Activated CD4-positive, alpha-beta T cell treated with anti-CD3 and anti-CD28 coated beads for 36 hours (primary cell): ENCODE measurements at regions of chr11 and their contacts with region 1.

Region 1: GRCh38 chr11:126310228-126310991 is 6.5 kb downstream of the DCPS start:
- DNase-seq: peak; percentile 74
- ATAC-seq: peak; percentile 60
- H3K4me3 Mint-ChIP-seq: no peak overlapping the region
- H3K27ac Mint-ChIP-seq: no peak overlapping the region
- H3K4me1 Mint-ChIP-seq: peaks cover 17% of the 10 kb centered on the region
- H3K27me3 Mint-ChIP-seq: no peaks in the 10 kb centered on the region

Region 2: GRCh38 chr11:125797641-125798040 is 512.8 kb before region 1 on chr11:
- CTCF ChIA-PET with region 1: no interaction called
- POLR2A ChIA-PET with region 1: no interaction called
- intact Hi-C with region 1: no loop called
- DNase-seq: no peak
- ATAC-seq: no peak
- H3K4me3 Mint-ChIP-seq: no peak overlapping the region
- H3K27ac Mint-ChIP-seq: no peak overlapping the region
- H3K4me1 Mint-ChIP-seq: no peaks in the 10 kb centered on the region
- H3K27me3 Mint-ChIP-seq: no peaks in the 10 kb centered on the region

Region 3: DNA sequence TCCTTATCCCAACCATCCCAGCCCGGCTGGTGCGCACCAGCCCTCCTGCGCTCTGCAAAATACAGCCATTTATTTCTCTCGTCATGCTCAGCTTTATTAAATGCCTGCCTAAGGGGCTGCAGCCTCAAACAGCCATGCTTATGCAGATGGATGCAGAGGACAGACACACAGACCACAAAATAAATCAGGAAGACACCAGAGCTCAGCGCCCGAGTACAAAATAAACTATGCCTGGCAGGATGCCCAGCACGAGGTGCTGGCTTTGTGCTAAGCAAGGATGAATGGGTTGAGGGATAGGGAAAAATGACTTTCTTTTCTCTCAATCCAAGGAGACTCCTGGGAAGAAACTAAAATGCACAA is 169.5 kb before region 1 on chr11:
- CTCF ChIA-PET with region 1: no interaction called
- POLR2A ChIA-PET with region 1: no interaction called
- intact Hi-C with region 1: no loop called
- DNase-seq: no peak
- ATAC-seq: no peak
- H3K4me3 Mint-ChIP-seq: no peak overlapping the region
- H3K27ac Mint-ChIP-seq: no peak overlapping the region
- H3K4me1 Mint-ChIP-seq: no peaks in the 10 kb centered on the region
- H3K27me3 Mint-ChIP-seq: peaks cover 7% of the 10 kb centered on the region

Region 4: GRCh38 chr11:126265811-126266210 is 44.6 kb before region 1 on chr11:
- CTCF ChIA-PET with region 1: no interaction called
- POLR2A ChIA-PET with region 1: no interaction called
- intact Hi-C with region 1: no loop called
- DNase-seq: no peak
- ATAC-seq: no peak
- H3K4me3 Mint-ChIP-seq: no peak overlapping the region
- H3K27ac Mint-ChIP-seq: peak overlapping the region; percentile 4
- H3K4me1 Mint-ChIP-seq: peaks cover 32% of the 10 kb centered on the region
- H3K27me3 Mint-ChIP-seq: no peaks in the 10 kb centered on the region

Region 5: DNA sequence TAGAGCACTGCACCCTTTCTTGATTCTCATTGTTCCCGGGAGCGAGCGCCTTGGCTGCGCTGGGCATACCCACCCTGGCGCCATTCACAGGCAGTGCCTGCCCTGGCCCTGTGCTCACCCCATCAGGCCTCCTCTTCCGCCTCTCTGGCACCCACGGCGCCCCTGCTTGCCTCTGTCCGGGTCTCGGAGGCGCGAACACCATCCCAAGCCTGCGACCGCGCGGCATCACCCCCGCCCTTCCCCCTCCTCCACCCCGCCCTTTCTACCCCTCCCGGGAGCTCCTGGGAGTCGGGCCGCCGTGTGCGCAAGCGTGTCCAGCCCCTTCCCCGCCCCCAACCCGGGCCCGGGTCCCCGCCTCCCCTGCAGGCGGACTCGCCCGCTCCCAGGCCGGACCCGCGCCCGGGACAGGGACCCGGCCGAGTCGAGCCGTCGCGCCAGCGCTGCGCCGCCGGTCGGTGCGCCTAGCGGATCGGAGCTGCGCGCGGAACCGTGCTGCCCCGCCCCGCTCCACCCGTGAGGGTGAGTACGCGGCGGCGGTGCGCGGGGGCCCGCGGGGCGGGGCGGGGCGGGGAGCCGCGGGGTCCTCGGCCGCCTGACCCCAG is 45.0 kb after region 1 on chr11 and contains the start of gene ST3GAL4:
- CTCF ChIA-PET with region 1: interaction called, 12 read pairs
- POLR2A ChIA-PET with region 1: no interaction called
- intact Hi-C with region 1: loop called (anchors 1 to 2 kb)
- DNase-seq: peak; percentile 86
- ATAC-seq: peak; percentile 77
- H3K4me3 Mint-ChIP-seq: peak within 1 kb of the TSS; percentile 93
- H3K27ac Mint-ChIP-seq: peak within 1 kb of the TSS; percentile 88
- H3K4me1 Mint-ChIP-seq: peaks cover 29% of the 10 kb centered on the region
- H3K27me3 Mint-ChIP-seq: no peaks in the 10 kb centered on the region
- total RNA-seq, gene ST3GAL4: 7.5 to 9.1 TPM

Region 6: GRCh38 chr11:126416542-126417090 is 106.2 kb after region 1 on chr11:
- CTCF ChIA-PET with region 1: interaction called, 4 read pairs
- POLR2A ChIA-PET with region 1: no interaction called
- intact Hi-C with region 1: loop called in 1 of 2 experiments (anchors 10 kb)
- DNase-seq: peak; percentile 88
- ATAC-seq: peak; percentile 100
- H3K4me3 Mint-ChIP-seq: peak overlapping the region; percentile 36
- H3K27ac Mint-ChIP-seq: peak overlapping the region; percentile 19
- H3K4me1 Mint-ChIP-seq: peaks cover 7% of the 10 kb centered on the region
- H3K27me3 Mint-ChIP-seq: no peaks in the 10 kb centered on the region

Region 7: GRCh38 chr11:126440792-126441514 is 130.5 kb after region 1 on chr11:
- CTCF ChIA-PET with region 1: interaction called, 3 read pairs
- POLR2A ChIA-PET with region 1: no interaction called
- intact Hi-C with region 1: loop called in 1 of 2 experiments (anchors 1 kb)
- DNase-seq: peak; percentile 84
- ATAC-seq: peak; percentile 90
- H3K4me3 Mint-ChIP-seq: no peak overlapping the region
- H3K27ac Mint-ChIP-seq: no peak overlapping the region
- H3K4me1 Mint-ChIP-seq: peaks cover 3% of the 10 kb centered on the region
- H3K27me3 Mint-ChIP-seq: peaks cover 7% of the 10 kb centered on the region